Spleen (tissue), 13 donors: ENCODE measurements at regions of chr12 and their contacts with region 1.

Region 1: DNA sequence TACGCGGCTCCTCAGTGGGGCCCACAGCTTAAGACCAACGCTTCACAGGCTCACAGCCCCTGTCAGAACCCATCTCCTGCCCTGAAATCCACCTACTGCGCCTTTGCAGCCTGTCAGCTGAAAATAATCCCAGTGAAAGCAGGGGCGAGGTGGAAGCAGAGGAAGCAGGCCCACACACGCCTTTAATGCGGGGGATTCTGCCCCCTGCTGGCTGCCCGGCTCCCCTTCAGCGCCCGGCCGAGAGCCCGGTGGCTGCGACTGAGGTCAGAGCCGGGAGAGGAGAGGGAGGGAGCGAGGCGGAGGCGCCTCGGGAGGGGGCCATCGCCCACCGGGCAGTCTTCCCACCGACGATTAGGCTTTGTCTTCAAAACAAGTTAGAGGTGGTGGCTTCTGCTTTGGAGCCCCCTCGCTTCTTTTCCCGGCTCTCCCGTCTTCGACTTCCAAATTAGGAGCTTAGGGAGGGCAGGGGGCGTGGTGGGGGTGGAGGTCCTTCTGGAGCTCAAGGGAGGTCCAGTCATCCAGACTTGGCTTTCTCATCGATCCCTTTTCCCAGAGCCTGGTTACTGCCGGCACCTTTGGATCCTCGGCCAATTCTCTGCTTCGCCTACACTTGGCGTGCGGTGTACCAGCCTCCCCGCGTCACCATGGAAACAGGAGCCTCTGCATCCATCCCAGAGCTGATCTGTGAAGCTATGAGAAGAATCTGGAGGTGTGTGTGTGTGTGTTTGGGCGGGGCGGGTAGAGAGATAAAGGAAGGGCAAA is 25.2 kb upstream of the RND1 start:
- DNase-seq: peak; percentile 90
- H3K4me3 ChIP-seq: peak overlapping the region in 3 of 8 donors; percentile 13 to 45 (median 14)
- H3K27ac ChIP-seq: no peak overlapping the region
- H3K4me1 ChIP-seq: peaks cover 6 to 11% (median 9%) of the 10 kb centered on the region in 6 donors
- H3K27me3 ChIP-seq: peaks cover 0 to 40% (median 17%) of the 10 kb centered on the region in 7 donors
- CTCF ChIP-seq: peak; percentile 83 to 97 (median 91)
- POLR2A ChIP-seq: no peak

Region 2: GRCh38 chr12:48851883-48852733 is 38.7 kb before region 1 on chr12 and contains the start of gene DDX23:
- intact Hi-C with region 1: loop called (anchors 2 kb)
- DNase-seq: peak; percentile 97
- H3K4me3 ChIP-seq: peak within 1 kb of the TSS; percentile 70 to 99 (median 91)
- H3K27ac ChIP-seq: peak within 1 kb of the TSS; percentile 82 to 93 (median 92)
- H3K4me1 ChIP-seq: peaks cover 23 to 60% (median 46%) of the 10 kb centered on the region in 6 donors
- H3K27me3 ChIP-seq: no peaks in the 10 kb centered on the region
- CTCF ChIP-seq: peak in 1 of 11 experiments; percentile 34
- POLR2A ChIP-seq: peak in 2 of 3 donors; percentile 3 to 34
- total RNA-seq, gene DDX23: 71.7 to 104 (median 91.7) TPM

Region 3: DNA sequence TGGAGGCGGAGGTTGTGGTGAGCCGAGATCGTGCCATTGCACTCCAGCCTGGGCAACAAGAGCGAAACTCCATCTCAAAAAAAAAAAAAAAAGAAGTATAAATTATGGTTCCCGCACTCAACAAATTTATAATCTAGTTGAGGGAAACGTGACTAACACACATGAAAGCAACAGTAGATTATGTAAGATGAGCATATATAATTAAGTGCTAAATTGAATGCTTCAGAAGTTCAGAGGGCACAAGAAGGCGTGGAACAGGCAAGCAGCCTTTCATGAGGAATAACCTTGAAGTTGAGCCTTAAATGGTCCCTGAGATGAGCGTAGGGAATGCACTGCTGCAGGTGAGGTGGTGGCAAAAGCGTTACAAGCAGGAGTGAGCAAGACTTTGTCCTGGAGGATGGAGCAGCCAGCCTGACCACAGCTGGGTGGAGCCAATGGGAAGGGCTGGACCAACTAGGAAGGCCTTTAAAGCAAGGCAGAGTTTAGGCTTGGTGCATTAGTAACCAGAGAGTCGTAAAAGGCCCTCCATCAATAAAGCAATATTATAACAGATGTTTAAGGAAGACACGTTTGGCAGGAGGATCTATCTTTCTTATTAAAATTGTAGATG is 328.7 kb after region 1 on chr12:
- intact Hi-C with region 1: no loop called
- DNase-seq: no peak
- H3K4me3 ChIP-seq: no peak overlapping the region
- H3K27ac ChIP-seq: no peak overlapping the region
- H3K4me1 ChIP-seq: peaks cover 2 to 45% (median 27%) of the 10 kb centered on the region in 6 donors
- H3K27me3 ChIP-seq: no peaks in the 10 kb centered on the region
- CTCF ChIP-seq: no peak
- POLR2A ChIP-seq: no peak